Endothelial cell of umbilical vein (primary cell): ENCODE measurements at regions of chr11 and their contacts with region 1.

Region 1: GRCh38 chr11:59088162-59088561 is 2.1 kb downstream of the GLYATL1B start:
- DNase-seq: no peak
- H3K4me3 ChIP-seq: no peak overlapping the region
- H3K27ac ChIP-seq: no peak overlapping the region
- H3K4me1 ChIP-seq: no peaks in the 10 kb centered on the region
- H3K27me3 ChIP-seq: peaks cover 0 to 3% of the 10 kb centered on the region in 2 experiments
- CTCF ChIP-seq: no peak
- POLR2A ChIP-seq: no peak

Region 2: DNA sequence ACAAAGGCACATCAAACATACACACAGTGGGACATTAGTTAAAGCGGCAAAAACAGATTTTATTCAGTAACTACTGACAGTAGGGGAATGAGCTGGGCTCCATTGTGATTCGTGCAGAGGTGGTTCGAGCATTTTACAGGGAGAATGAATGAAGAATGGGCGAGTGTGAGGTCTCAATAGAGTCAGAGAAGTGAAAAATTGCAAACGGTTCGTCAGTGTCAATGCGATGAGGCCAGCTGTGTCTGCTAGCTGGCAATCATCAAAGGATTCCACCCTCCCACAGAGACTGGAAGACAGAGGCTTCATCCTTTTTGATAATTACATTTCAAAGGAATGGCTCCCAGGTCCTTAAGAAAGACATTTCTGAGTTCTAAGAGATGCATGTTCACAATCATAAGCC is 440.6 kb after region 1 on chr11:
- CTCF ChIA-PET with region 1: no interaction called
- POLR2A ChIA-PET with region 1: no interaction called
- dilution Hi-C with region 1: no loop called
- intact Hi-C with region 1: loop called (anchors 5 kb)
- DNase-seq: no peak
- H3K4me3 ChIP-seq: no peak overlapping the region
- H3K27ac ChIP-seq: no peak overlapping the region
- H3K4me1 ChIP-seq: no peaks in the 10 kb centered on the region
- H3K27me3 ChIP-seq: peaks cover 9 to 12% of the 10 kb centered on the region in 2 experiments
- CTCF ChIP-seq: no peak
- POLR2A ChIP-seq: no peak